Right ventricle myocardium inferior (tissue), 1 donor: ENCODE measurements at regions of chr18 and their contacts with region 1.

Region 1: GRCh38 chr18:31722369-31722957 is 38.1 kb upstream of the B4GALT6 start:
- DNase-seq: peak; percentile 69
- ATAC-seq: peak; percentile 83

Region 2: DNA sequence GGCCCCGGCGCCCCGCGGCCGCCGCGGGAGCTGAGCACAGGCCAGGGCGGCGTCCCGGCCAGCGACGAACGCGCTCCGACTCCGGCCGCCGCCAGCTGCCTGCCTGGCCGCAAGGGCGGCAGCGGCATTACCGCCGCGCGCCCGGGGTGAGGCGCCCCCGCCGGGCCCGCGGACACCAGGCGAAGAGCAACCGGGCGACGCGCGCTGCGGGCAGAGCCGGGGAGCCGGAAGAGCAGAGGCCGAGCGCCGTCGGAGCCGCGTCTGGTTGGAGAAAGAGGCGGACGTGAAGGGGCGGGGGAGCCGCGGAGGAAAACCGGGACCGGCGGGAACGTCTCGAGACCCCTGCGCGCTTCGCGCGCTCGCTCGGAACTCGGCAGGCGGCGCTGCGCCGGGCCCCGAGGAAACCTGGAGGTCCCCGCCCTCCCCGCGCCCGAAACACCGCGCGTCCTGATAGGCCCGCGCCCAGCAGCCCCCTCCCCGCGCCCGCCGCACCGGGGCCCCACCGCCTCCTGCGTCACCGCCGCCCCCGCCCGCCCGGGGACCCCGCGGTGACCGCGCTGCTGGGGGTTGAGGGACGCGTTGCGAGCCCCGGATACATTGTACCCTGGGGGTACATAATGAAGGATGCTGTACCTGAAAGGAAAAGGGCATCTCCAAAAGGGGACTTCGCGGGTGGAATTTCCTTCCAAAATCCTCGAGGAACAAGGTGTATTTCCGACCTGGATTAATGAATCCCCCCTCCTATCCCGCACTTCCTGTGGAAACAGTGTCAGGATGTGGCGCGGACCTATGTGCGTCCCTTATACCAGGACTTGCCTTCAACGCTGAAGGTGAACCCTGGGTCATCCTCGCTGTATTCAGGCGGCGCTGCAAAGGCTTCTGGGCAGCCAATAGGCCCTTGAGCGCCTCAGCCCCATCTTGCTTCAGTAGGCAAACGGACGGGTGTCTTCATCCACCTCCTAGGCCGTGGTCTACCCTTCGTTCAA is 37.1 kb before region 1 on chr18:
- intact Hi-C with region 1: loop called (anchors 2 kb)
- DNase-seq: peak; percentile 86
- ATAC-seq: peak; percentile 88